ENCODE measurements at regions of chr1 and their contacts with region 1.

Region 1: DNA sequence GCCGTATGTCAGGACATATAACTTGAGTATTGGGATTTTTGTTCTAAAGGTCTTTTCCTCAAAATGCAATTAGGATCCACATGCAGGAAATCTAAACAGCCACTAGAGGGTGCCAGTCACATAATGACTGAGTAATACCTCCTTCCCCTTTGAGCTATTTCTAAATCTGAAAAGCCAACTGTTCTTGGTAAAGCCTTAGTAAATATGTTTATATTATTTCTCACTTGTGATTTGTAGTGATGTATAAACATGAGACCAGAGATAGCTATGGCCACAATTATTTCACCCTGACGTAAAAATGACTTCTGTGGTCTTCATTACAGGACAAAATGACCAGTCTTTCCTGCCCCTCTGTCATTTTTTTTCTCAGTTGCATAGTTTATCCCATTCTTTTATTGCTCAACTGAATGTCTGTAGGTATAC is 41.0 kb upstream of the DR1 start:
- DNase-seq: peak; percentile 26
- H3K4me3 Mint-ChIP-seq: no peak overlapping the region
- H3K27ac Mint-ChIP-seq: no peak overlapping the region
- H3K4me1 Mint-ChIP-seq: no peaks in the 10 kb centered on the region
- H3K27me3 Mint-ChIP-seq: no peaks in the 10 kb centered on the region

Region 2: GRCh38 chr1:93196591-93196990 is 108.1 kb before region 1 on chr1:
- CTCF ChIA-PET with region 1: no interaction called
- POLR2A ChIA-PET with region 1: no interaction called
- intact Hi-C with region 1: no loop called
- DNase-seq: no peak
- H3K4me3 Mint-ChIP-seq: no peak overlapping the region
- H3K27ac Mint-ChIP-seq: no peak overlapping the region
- H3K4me1 Mint-ChIP-seq: no peaks in the 10 kb centered on the region
- H3K27me3 Mint-ChIP-seq: no peaks in the 10 kb centered on the region

Region 3: DNA sequence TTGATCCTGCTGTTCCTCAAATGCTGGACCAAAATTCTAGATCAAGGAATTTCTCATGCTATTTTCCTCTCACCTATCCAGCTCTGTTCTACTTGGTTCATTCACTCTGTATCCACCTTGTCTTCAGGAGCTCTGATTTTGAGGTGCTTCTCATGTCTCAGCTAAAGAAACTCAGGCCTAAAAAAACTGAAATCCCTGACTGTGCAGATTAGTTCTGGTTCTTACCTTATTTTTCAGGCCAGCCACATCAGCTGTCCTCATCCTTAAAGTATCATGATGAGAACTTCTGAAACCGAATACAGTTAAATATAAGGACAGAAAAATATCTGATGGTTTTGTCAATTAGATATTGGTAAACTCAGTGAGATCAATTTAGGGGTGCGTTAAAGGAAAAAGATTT is 13.2 kb after region 1 on chr1:
- CTCF ChIA-PET with region 1: interaction called, 14 read pairs
- POLR2A ChIA-PET with region 1: no interaction called
- intact Hi-C with region 1: no loop called
- DNase-seq: no peak
- H3K4me3 Mint-ChIP-seq: no peak overlapping the region
- H3K27ac Mint-ChIP-seq: no peak overlapping the region
- H3K4me1 Mint-ChIP-seq: no peaks in the 10 kb centered on the region
- H3K27me3 Mint-ChIP-seq: no peaks in the 10 kb centered on the region

Region 4: GRCh38 chr1:93437976-93438605 is 133.4 kb after region 1 on chr1:
- CTCF ChIA-PET with region 1: interaction called, 16 read pairs
- POLR2A ChIA-PET with region 1: no interaction called
- intact Hi-C with region 1: loop called (anchors 5 kb)
- DNase-seq: no peak
- H3K4me3 Mint-ChIP-seq: no peak overlapping the region
- H3K27ac Mint-ChIP-seq: no peak overlapping the region
- H3K4me1 Mint-ChIP-seq: no peaks in the 10 kb centered on the region
- H3K27me3 Mint-ChIP-seq: peaks cover 5% of the 10 kb centered on the region

Measured in activated CD4-positive, alpha-beta memory T cell treated with anti-CD3 and anti-CD28 coated beads for 36 hours (primary cell).